ENCODE measurements at regions of chr10 and their contacts with region 1.

Region 1: GRCh38 chr10:35126530-35127296 is at the start of gene CREM:
- DNase-seq: peak; percentile 99
- ATAC-seq: peak; percentile 79
- H3K4me3 Mint-ChIP-seq: peak within 1 kb of the TSS; percentile 97
- H3K27ac Mint-ChIP-seq: peak within 1 kb of the TSS; percentile 95
- H3K4me1 Mint-ChIP-seq: peaks cover 46% of the 10 kb centered on the region
- H3K27me3 Mint-ChIP-seq: no peaks in the 10 kb centered on the region
- total RNA-seq, gene CREM: 102 to 192 TPM

Region 2: GRCh38 chr10:35208536-35208935 is 81.8 kb after region 1 on chr10:
- CTCF ChIA-PET with region 1: interaction called, 22 read pairs
- DNase-seq: peak; percentile 89
- ATAC-seq: peak; percentile 94
- H3K4me3 Mint-ChIP-seq: peak overlapping the region; percentile 61
- H3K27ac Mint-ChIP-seq: peak overlapping the region; percentile 90
- H3K4me1 Mint-ChIP-seq: peaks cover 62% of the 10 kb centered on the region
- H3K27me3 Mint-ChIP-seq: no peaks in the 10 kb centered on the region

Region 3: GRCh38 chr10:35218339-35218955 is 91.7 kb after region 1 on chr10:
- CTCF ChIA-PET with region 1: interaction called, 111 read pairs
- DNase-seq: peak; percentile 92
- ATAC-seq: peak; percentile 84
- H3K4me3 Mint-ChIP-seq: peak overlapping the region; percentile 46
- H3K27ac Mint-ChIP-seq: peak overlapping the region; percentile 81
- H3K4me1 Mint-ChIP-seq: peaks cover 51% of the 10 kb centered on the region
- H3K27me3 Mint-ChIP-seq: no peaks in the 10 kb centered on the region

Measured in activated CD8-positive, alpha-beta memory T cell treated with anti-CD3 and anti-CD28 coated beads, Interleukin-2, amount 10 ng/mL, durations not matched to agents 7 days and 5 days (primary cell).